PC-9 (cell line): ENCODE measurements at regions of chr10 and their contacts with region 1.

Region 1: GRCh38 chr10:71927776-71928592 is 36.2 kb upstream of the CHST3 start:
- DNase-seq: peak in 1 of 2 experiments; percentile 77
- H3K4me3 ChIP-seq: no peak overlapping the region
- H3K27ac ChIP-seq: no peak overlapping the region
- H3K4me1 ChIP-seq: 0 out of 2 replicates have a peak, but pooled peaks cover 3% of the 10 kb centered on the region
- H3K27me3 ChIP-seq: no peaks in the 10 kb centered on the region
- CTCF ChIP-seq: no peak

Region 2: DNA sequence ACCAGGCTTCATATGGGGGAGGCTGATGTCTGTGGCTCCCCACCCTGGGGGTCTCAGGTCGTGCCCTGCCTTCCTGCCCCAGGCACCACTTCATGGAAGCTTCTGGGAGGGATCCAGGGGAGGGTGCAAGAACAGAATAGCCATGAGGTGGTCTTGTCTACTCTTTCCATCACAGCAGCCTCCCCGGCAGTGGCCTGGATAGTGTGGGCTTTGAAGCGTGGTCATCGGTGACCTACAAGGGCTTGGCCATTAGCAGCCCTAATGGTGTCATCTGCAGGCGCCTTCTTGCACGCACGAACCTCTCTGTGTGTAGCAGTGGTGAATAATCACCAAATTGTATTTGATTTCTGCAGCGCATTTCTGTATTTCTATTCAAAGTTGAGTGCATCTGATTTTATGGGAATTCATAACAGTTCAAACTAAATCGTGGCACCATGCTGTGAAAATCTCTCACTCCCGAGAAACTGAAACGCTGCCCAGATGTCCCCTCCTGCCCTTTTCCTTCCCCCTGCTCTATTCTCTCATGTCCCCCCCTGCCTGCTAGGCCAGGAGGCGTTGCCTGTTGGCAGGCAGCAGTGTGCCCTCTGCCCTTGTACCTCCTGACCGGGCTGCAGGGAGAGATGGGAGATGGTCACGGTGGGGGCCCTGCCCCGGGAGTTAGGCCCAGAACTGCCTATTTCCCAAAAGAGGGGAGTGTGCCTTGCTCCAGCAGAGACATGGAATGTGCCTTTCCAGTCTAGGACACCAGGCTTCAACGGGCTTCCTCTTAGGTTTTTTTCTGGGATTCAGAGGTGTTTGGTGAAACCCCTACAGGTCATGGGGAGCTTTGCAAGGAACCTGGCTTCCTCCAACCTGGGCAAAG is 496.5 kb before region 1 on chr10:
- CTCF ChIA-PET with region 1: no interaction called
- POLR2A ChIA-PET with region 1: no interaction called
- intact Hi-C with region 1: no loop called
- DNase-seq: no peak
- H3K4me3 ChIP-seq: no peak overlapping the region
- H3K27ac ChIP-seq: no peak overlapping the region
- H3K4me1 ChIP-seq: peaks cover 23% of the 10 kb centered on the region
- H3K27me3 ChIP-seq: no peaks in the 10 kb centered on the region
- CTCF ChIP-seq: peak; percentile 48

Region 3: GRCh38 chr10:71459513-71459912 is 468.5 kb before region 1 on chr10:
- CTCF ChIA-PET with region 1: no interaction called
- POLR2A ChIA-PET with region 1: no interaction called
- intact Hi-C with region 1: no loop called
- DNase-seq: no peak
- H3K4me3 ChIP-seq: no peak overlapping the region
- H3K27ac ChIP-seq: no peak overlapping the region
- H3K4me1 ChIP-seq: no peaks in the 10 kb centered on the region
- H3K27me3 ChIP-seq: no peaks in the 10 kb centered on the region
- CTCF ChIP-seq: no peak

Region 4: GRCh38 chr10:71782917-71783490 is 145.0 kb before region 1 on chr10:
- CTCF ChIA-PET with region 1: no interaction called
- POLR2A ChIA-PET with region 1: no interaction called
- intact Hi-C with region 1: no loop called
- DNase-seq: no peak
- H3K4me3 ChIP-seq: no peak overlapping the region
- H3K27ac ChIP-seq: no peak overlapping the region
- H3K4me1 ChIP-seq: no peaks in the 10 kb centered on the region
- H3K27me3 ChIP-seq: no peaks in the 10 kb centered on the region
- CTCF ChIP-seq: no peak

Region 5: DNA sequence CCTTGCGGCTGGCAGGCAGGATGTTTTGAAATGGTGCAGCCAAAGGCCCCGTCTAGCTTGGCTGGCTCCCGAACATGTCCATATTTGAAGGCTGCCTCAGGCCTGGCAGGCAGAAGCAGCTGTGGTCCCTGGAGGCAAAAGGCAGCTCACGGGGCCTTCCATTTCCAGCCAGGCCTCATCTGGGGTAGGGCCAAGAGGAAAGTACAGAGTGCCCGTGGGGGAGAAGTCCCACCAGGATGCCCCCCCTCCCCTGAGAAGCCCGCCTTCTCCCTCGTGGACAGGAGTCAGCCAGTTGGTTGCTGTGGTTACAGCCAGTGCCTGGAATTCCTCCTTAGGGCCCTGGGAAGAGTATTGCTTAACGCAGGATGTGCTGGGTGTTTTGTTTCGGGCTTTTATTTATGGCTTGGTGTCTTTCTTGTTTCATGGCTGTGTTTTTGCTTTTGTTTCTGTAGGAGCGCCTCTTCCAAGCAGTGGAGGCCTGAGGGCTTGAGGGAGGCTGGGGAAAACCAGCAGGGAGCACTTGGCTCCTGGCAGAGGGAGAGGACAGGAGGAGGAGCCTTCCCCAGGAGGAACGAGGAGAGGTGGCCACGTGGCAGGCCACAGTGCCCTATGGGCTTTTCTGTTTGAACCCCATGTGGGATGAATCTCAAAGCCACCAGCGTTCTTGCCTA is 81.6 kb after region 1 on chr10:
- CTCF ChIA-PET with region 1: no interaction called
- POLR2A ChIA-PET with region 1: no interaction called
- intact Hi-C with region 1: no loop called
- DNase-seq: no peak
- H3K4me3 ChIP-seq: no peak overlapping the region
- H3K27ac ChIP-seq: no peak overlapping the region
- H3K4me1 ChIP-seq: no peaks in the 10 kb centered on the region
- H3K27me3 ChIP-seq: no peaks in the 10 kb centered on the region
- CTCF ChIP-seq: no peak

Region 6: DNA sequence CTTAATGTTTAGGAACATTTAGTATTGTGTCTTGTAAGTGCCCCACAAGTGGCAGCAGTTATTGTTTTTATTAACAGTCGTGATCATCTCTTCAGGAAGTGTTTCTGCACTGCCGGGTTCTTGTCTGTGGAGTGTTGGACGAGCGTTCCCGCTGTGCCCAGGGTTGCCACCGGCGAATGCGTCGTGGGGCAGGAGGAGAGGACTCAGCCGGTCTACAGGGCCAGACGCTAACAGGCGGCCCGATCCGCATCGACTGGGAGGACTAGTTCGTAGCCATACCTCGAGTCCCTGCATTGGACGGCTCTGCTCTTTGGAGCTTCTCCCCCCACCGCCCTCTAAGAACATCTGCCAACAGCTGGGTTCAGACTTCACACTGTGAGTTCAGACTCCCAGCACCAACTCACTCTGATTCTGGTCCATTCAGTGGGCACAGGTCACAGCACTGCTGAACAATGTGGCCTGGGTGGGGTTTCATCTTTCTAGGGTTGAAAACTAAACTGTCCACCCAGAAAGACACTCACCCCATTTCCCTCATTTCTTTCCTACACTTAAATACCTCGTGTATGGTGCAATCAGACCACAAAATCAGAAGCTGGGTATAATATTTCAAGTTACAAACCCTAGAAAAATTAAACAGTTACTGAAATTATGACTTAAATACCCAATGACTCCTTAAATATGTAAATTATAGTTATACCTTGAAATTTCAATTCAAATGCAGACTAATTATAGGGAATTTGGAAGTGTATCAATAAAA is 1004.5 kb after region 1 on chr10:
- CTCF ChIA-PET with region 1: no interaction called
- POLR2A ChIA-PET with region 1: no interaction called
- intact Hi-C with region 1: loop called (anchors 5 kb)
- DNase-seq: no peak
- H3K4me3 ChIP-seq: no peak overlapping the region
- H3K27ac ChIP-seq: no peak overlapping the region
- H3K4me1 ChIP-seq: no peaks in the 10 kb centered on the region
- H3K27me3 ChIP-seq: no peaks in the 10 kb centered on the region
- CTCF ChIP-seq: no peak